AG04449 (cell line): ENCODE measurements at regions of chr13 and their contacts with region 1.

Region 1: DNA sequence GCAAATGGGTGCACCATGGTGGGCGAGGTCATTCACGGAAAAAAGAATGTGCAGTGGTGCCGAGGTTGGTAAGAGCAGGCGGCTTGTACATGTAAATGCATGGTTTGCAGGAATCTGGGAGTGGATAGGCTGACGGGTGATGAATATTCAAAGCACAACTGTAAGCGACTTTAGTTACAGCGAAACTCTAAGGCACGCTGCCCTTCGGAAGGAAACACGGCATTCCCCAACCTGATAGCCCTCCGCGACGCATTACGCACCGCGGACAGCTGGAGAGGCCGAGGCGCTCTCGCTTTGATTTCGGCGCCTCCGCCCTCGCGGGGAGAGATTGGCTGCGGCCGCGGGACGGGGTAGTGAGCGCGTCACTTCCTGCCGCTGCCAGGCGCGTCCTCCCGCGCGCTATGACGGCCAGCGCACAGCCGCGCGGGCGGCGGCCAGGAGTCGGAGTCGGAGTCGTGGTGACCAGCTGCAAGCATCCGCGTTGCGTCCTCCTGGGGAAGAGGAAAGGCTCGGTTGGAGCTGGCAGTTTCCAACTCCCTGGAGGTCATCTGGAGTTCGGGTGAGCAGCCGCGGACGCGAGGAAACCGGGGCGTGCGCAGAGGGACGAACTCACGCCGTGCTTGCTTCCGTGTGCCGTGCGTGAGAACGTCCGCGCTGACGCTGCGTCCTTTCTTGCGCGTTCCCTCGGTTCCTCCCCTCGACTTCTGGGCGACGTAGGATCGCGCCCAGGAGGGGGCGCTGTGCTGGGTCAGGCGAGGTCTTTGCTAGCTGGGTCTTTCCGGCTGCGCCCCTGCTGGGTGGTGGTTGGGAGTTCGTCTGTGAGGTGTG is at the start of gene NUDT15:
- DNase-seq: peak; percentile 69
- H3K4me3 ChIP-seq: peak within 1 kb of the TSS; percentile 99
- CTCF ChIP-seq: peak; percentile 99

Region 2: GRCh38 chr13:47747901-47748300 is 289.7 kb before region 1 on chr13:
- CTCF ChIA-PET with region 1: no interaction called
- POLR2A ChIA-PET with region 1: no interaction called
- DNase-seq: no peak
- H3K4me3 ChIP-seq: no peak overlapping the region
- CTCF ChIP-seq: no peak

Region 3: GRCh38 chr13:48010698-48011097 is 26.9 kb before region 1 on chr13:
- CTCF ChIA-PET with region 1: interaction called, 16 read pairs
- POLR2A ChIA-PET with region 1: no interaction called
- DNase-seq: no peak
- H3K4me3 ChIP-seq: no peak overlapping the region
- CTCF ChIP-seq: no peak

Region 4: GRCh38 chr13:48019796-48020195 is 17.8 kb before region 1 on chr13:
- CTCF ChIA-PET with region 1: interaction called, 11 read pairs
- POLR2A ChIA-PET with region 1: no interaction called
- DNase-seq: no peak
- H3K4me3 ChIP-seq: no peak overlapping the region
- CTCF ChIP-seq: no peak

Region 5: GRCh38 chr13:48050550-48050949 is 13.0 kb after region 1 on chr13:
- CTCF ChIA-PET with region 1: interaction called, 56 read pairs
- POLR2A ChIA-PET with region 1: interaction called, 5 read pairs
- DNase-seq: no peak
- H3K4me3 ChIP-seq: no peak overlapping the region
- CTCF ChIP-seq: no peak